GM12878 (cell line): ENCODE measurements at regions of chr3 and their contacts with region 1.

Region 1: DNA sequence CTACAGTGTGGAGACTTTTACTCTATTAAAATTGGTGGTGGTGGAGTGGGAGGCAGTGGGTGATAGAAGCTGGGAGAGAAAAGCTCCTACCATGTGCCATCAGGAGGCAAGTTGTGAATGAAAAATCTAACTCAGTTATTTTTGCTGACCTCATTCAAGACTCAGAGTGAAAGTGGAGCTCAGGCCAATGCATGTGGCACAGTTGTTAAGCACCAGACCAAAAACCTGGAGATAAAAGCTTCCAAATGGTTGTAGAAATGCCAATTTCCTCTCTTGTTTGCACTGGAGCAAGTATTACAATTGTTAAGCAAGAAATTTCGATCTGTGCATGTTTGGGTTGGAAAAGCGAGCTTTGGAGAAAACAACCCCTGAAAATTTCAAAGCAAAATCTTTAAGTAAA is 81.5 kb upstream of the PRICKLE2 start:
- DNase-seq: no peak
- ATAC-seq: peak; percentile 21; the same call in 1 of the 3 replicates
- H3K4me3 ChIP-seq: no peak overlapping the region
- H3K27ac ChIP-seq: no peak overlapping the region
- H3K4me1 ChIP-seq: no peaks in the 10 kb centered on the region
- H3K27me3 ChIP-seq: no peaks in the 10 kb centered on the region
- CTCF ChIP-seq: no peak
- EP300 ChIP-seq: no peak
- POLR2A ChIP-seq: no peak
- RAD21 ChIP-seq: no peak

Region 2: GRCh38 chr3:64267721-64268604 is 38.8 kb before region 1 on chr3:
- CTCF ChIA-PET with region 1: interaction called, 5 read pairs
- POLR2A ChIA-PET with region 1: interaction called, 4 read pairs
- RAD21 ChIA-PET with region 1: interaction called, 4 read pairs
- SMC1A ChIA-PET with region 1: interaction called, 29 read pairs
- in situ Hi-C with region 1: no loop called
- intact Hi-C with region 1: no loop called
- DNase-seq: no peak
- ATAC-seq: no peak
- H3K4me3 ChIP-seq: no peak overlapping the region
- H3K27ac ChIP-seq: no peak overlapping the region
- H3K4me1 ChIP-seq: no peaks in the 10 kb centered on the region
- H3K27me3 ChIP-seq: peaks cover 0 to 5% of the 10 kb centered on the region in 2 experiments; a peak in 3 of 4 replicates
- CTCF ChIP-seq: no peak
- EP300 ChIP-seq: no peak
- POLR2A ChIP-seq: no peak
- RAD21 ChIP-seq: no peak

Region 3: GRCh38 chr3:64295594-64295993 is 11.2 kb before region 1 on chr3:
- CTCF ChIA-PET with region 1: interaction called, 8 read pairs
- POLR2A ChIA-PET with region 1: interaction called, 7 read pairs
- RAD21 ChIA-PET with region 1: no interaction called
- SMC1A ChIA-PET with region 1: interaction called, 11 read pairs
- in situ Hi-C with region 1: no loop called
- intact Hi-C with region 1: no loop called
- DNase-seq: no peak
- ATAC-seq: no peak
- H3K4me3 ChIP-seq: no peak overlapping the region
- H3K27ac ChIP-seq: no peak overlapping the region
- H3K4me1 ChIP-seq: no peaks in the 10 kb centered on the region
- H3K27me3 ChIP-seq: no peaks in the 10 kb centered on the region
- CTCF ChIP-seq: no peak
- EP300 ChIP-seq: no peak
- POLR2A ChIP-seq: no peak
- RAD21 ChIP-seq: no peak

Region 4: GRCh38 chr3:64321747-64322146 is 15.0 kb after region 1 on chr3:
- CTCF ChIA-PET with region 1: interaction called, 7 read pairs
- POLR2A ChIA-PET with region 1: no interaction called
- RAD21 ChIA-PET with region 1: interaction called, 6 read pairs
- SMC1A ChIA-PET with region 1: interaction called, 11 read pairs
- in situ Hi-C with region 1: no loop called
- intact Hi-C with region 1: no loop called
- DNase-seq: no peak
- ATAC-seq: no peak
- H3K4me3 ChIP-seq: no peak overlapping the region
- H3K27ac ChIP-seq: no peak overlapping the region
- H3K4me1 ChIP-seq: no peaks in the 10 kb centered on the region
- H3K27me3 ChIP-seq: no peaks in the 10 kb centered on the region
- CTCF ChIP-seq: no peak
- EP300 ChIP-seq: no peak
- POLR2A ChIP-seq: no peak
- RAD21 ChIP-seq: no peak

Region 5: GRCh38 chr3:64345371-64345770 is 38.6 kb after region 1 on chr3:
- CTCF ChIA-PET with region 1: interaction called, 3 read pairs
- POLR2A ChIA-PET with region 1: interaction called, 11 read pairs
- RAD21 ChIA-PET with region 1: interaction called, 3 read pairs
- SMC1A ChIA-PET with region 1: interaction called, 6 read pairs
- in situ Hi-C with region 1: no loop called
- intact Hi-C with region 1: no loop called
- DNase-seq: no peak
- ATAC-seq: no peak
- H3K4me3 ChIP-seq: no peak overlapping the region
- H3K27ac ChIP-seq: no peak overlapping the region
- H3K4me1 ChIP-seq: no peaks in the 10 kb centered on the region
- H3K27me3 ChIP-seq: no peaks in the 10 kb centered on the region; a peak in 1 of 4 replicates
- CTCF ChIP-seq: no peak
- EP300 ChIP-seq: no peak
- POLR2A ChIP-seq: no peak
- RAD21 ChIP-seq: no peak

Region 6: DNA sequence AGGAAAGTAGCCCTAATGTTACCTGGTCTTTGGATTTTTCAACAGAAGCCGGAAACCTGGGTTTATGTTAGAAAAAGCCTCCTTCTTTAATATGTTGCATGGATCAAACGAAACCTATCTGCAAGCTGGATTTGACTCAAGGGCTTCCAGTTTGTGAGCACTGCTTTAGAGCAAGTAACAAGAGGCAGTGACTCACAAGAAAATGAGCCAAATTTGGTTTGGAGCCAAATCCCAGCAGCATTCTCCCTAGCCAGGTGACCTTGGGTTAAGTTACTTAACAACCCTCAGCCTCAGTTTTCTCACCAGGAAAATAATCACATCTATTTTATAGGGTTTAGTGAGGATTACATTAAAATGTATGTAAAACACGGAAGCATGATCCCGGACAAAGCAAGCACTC is 133.8 kb after region 1 on chr3:
- CTCF ChIA-PET with region 1: no interaction called
- POLR2A ChIA-PET with region 1: no interaction called
- RAD21 ChIA-PET with region 1: no interaction called
- SMC1A ChIA-PET with region 1: no interaction called
- in situ Hi-C with region 1: no loop called
- intact Hi-C with region 1: no loop called
- DNase-seq: no peak
- ATAC-seq: no peak
- H3K4me3 ChIP-seq: no peak overlapping the region
- H3K27ac ChIP-seq: no peak overlapping the region
- H3K4me1 ChIP-seq: no peaks in the 10 kb centered on the region
- H3K27me3 ChIP-seq: peaks cover 3 to 4% of the 10 kb centered on the region in 2 experiments; a peak in 2 of 4 replicates
- CTCF ChIP-seq: no peak
- EP300 ChIP-seq: no peak
- POLR2A ChIP-seq: no peak
- RAD21 ChIP-seq: no peak